ENCODE measurements at regions of chr17 and their contacts with region 1.

Region 1: GRCh38 chr17:9522074-9522473 is 53.5 kb downstream of the STX8 start:
- DNase-seq: peak in 3 of 9 donors; percentile 11 to 16 (median 11)
- ATAC-seq: peak; percentile 34
- H3K4me3 ChIP-seq: no peak overlapping the region
- H3K4me3 Mint-ChIP-seq: no peak overlapping the region
- H3K27ac ChIP-seq: no peak overlapping the region
- H3K27ac Mint-ChIP-seq: no peak overlapping the region
- H3K4me1 ChIP-seq: peaks cover 0 to 8% of the 10 kb centered on the region in 2 donors
- H3K4me1 Mint-ChIP-seq: peaks cover 13 to 30% (median 23%) of the 10 kb centered on the region in 7 donors
- H3K27me3 ChIP-seq: no peaks in the 10 kb centered on the region
- H3K27me3 Mint-ChIP-seq: no peaks in the 10 kb centered on the region

Region 2: DNA sequence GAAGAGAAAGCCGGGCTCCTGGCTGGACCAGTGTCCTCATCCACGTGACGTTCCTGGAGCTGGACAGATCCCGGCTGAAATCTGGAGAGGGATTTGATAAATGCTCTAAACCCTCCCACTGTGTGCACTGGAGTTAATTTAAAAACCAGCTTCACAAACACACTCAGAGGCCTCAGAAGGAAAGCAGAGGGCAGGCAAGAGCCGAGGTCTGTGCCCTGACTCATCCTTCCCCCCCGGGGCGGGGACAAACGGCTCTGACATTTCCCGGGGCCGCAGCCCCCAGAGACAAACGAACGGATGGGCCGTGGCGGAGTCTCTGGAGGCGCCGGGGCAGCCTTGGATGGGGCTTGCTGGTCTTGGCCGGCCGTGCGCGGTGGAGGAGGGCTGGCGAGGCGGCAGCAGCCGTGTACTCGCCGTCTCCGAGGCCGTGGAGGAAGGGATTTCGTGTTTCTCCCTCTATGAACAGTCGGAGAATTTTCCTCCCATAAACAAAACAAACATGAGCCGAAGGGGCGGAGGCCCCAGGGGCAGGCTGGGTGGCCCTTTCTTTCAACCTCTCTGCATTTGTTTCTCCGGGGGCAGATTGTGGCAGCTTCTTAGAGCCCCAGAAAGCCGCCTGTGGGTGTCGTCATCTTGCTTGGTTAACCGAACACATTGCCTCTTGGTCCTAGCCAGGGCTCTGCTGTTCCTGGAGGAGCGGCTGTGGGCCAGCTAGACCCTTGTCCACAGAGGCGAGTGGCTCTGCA is 406.5 kb before region 1 on chr17:
- CTCF ChIA-PET with region 1: no interaction called
- POLR2A ChIA-PET with region 1: no interaction called
- intact Hi-C with region 1: loop called (anchors 10 kb)
- DNase-seq: peak in 6 of 9 donors; percentile 9 to 56 (median 20)
- ATAC-seq: peak; percentile 63
- H3K4me3 ChIP-seq: peak overlapping the region; percentile 13
- H3K4me3 Mint-ChIP-seq: peak overlapping the region in 9 of 10 donors; percentile 55 to 78 (median 69)
- H3K27ac ChIP-seq: no peak overlapping the region
- H3K27ac Mint-ChIP-seq: peak overlapping the region in 3 of 9 donors; percentile 13 to 34 (median 31)
- H3K4me1 ChIP-seq: no peaks in the 10 kb centered on the region
- H3K4me1 Mint-ChIP-seq: peaks cover 0 to 9% (median 8%) of the 10 kb centered on the region in 7 donors
- H3K27me3 ChIP-seq: no peaks in the 10 kb centered on the region
- H3K27me3 Mint-ChIP-seq: peaks cover 0 to 10% (median 7%) of the 10 kb centered on the region in 5 donors

Region 3: DNA sequence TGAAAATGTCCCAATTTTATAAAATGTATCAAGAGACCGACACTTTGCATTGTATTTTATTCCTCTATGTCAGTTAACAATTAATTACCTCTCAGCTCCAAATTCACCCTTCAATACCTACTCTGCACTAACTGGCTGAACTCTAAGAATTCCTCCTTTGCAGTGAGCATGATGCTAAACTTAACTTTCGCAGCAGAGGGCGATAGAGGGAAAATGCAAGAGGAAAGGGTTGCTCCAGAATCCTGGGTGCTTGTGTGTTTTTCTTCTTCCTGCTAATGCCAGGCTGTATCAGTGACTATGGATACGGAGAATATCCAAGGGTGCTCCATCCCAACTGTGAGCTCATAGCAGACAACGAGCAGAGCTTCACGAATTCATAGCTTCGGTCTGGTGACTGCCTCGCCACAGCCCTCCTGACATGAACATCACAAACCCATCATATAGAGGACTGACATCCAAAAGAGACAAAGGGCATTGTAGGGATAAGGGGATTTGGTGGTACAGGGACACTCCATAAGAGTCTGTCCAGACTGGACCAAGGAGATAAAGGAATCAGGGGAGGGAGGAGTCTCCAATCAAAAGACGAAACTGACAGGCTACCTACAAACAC is 119.4 kb before region 1 on chr17:
- CTCF ChIA-PET with region 1: no interaction called
- POLR2A ChIA-PET with region 1: no interaction called
- intact Hi-C with region 1: loop called in 1 of 2 experiments (anchors 1 kb)
- DNase-seq: peak in 1 of 9 donors; percentile 23
- ATAC-seq: no peak
- H3K4me3 ChIP-seq: no peak overlapping the region
- H3K4me3 Mint-ChIP-seq: no peak overlapping the region
- H3K27ac ChIP-seq: no peak overlapping the region
- H3K27ac Mint-ChIP-seq: no peak overlapping the region
- H3K4me1 ChIP-seq: no peaks in the 10 kb centered on the region
- H3K4me1 Mint-ChIP-seq: no peaks in the 10 kb centered on the region
- H3K27me3 ChIP-seq: no peaks in the 10 kb centered on the region
- H3K27me3 Mint-ChIP-seq: no peaks in the 10 kb centered on the region

Region 4: GRCh38 chr17:9456330-9456729 is 65.7 kb before region 1 on chr17:
- CTCF ChIA-PET with region 1: no interaction called
- POLR2A ChIA-PET with region 1: no interaction called
- intact Hi-C with region 1: no loop called
- DNase-seq: no peak
- ATAC-seq: no peak
- H3K4me3 ChIP-seq: no peak overlapping the region
- H3K4me3 Mint-ChIP-seq: no peak overlapping the region
- H3K27ac ChIP-seq: no peak overlapping the region
- H3K27ac Mint-ChIP-seq: no peak overlapping the region
- H3K4me1 ChIP-seq: no peaks in the 10 kb centered on the region
- H3K4me1 Mint-ChIP-seq: peaks cover 0 to 4% (median 0%) of the 10 kb centered on the region in 7 donors
- H3K27me3 ChIP-seq: no peaks in the 10 kb centered on the region
- H3K27me3 Mint-ChIP-seq: no peaks in the 10 kb centered on the region